ENCODE measurements at regions of chr4 and their contacts with region 1.

Region 1: GRCh38 chr4:159175085-159175988 is 72.5 kb downstream of the RAPGEF2 start:
- DNase-seq: peak; percentile 82 to 86
- H3K4me3 ChIP-seq: peak overlapping the region; percentile 22
- H3K4me3 Mint-ChIP-seq: peak overlapping the region; percentile 63
- H3K27ac Mint-ChIP-seq: peak overlapping the region; percentile 71
- H3K4me1 ChIP-seq: peaks cover 64% of the 10 kb centered on the region
- H3K4me1 Mint-ChIP-seq: peaks cover 72% of the 10 kb centered on the region
- H3K27me3 ChIP-seq: no peaks in the 10 kb centered on the region
- H3K27me3 Mint-ChIP-seq: no peaks in the 10 kb centered on the region
- CTCF ChIP-seq: peak; percentile 63 to 65

Region 2: GRCh38 chr4:158722917-158723793 is 452.2 kb before region 1 on chr4 and contains the start of gene PPID:
- CTCF ChIA-PET with region 1: no interaction called
- POLR2A ChIA-PET with region 1: no interaction called
- intact Hi-C with region 1: loop called (anchors 2 kb)
- DNase-seq: peak; percentile 85 to 88
- H3K4me3 ChIP-seq: peak within 1 kb of the TSS; percentile 68
- H3K4me3 Mint-ChIP-seq: peak within 1 kb of the TSS; percentile 90
- H3K27ac Mint-ChIP-seq: peak within 1 kb of the TSS; percentile 95
- H3K4me1 ChIP-seq: peaks cover 6% of the 10 kb centered on the region
- H3K4me1 Mint-ChIP-seq: peaks cover 9% of the 10 kb centered on the region
- H3K27me3 ChIP-seq: no peaks in the 10 kb centered on the region
- H3K27me3 Mint-ChIP-seq: no peaks in the 10 kb centered on the region
- CTCF ChIP-seq: no peak
- total RNA-seq, gene PPID: 50.9 and 57.2 TPM in 2 replicates

Region 3: GRCh38 chr4:158856852-158857251 is 318.5 kb before region 1 on chr4:
- CTCF ChIA-PET with region 1: interaction called, 6 read pairs
- POLR2A ChIA-PET with region 1: no interaction called
- intact Hi-C with region 1: loop called (anchors 1 kb)
- DNase-seq: peak in 1 of 2 experiments; percentile 28
- H3K4me3 ChIP-seq: no peak overlapping the region
- H3K4me3 Mint-ChIP-seq: no peak overlapping the region
- H3K27ac Mint-ChIP-seq: no peak overlapping the region
- H3K4me1 ChIP-seq: peaks cover 39% of the 10 kb centered on the region
- H3K4me1 Mint-ChIP-seq: peaks cover 30% of the 10 kb centered on the region
- H3K27me3 ChIP-seq: no peaks in the 10 kb centered on the region
- H3K27me3 Mint-ChIP-seq: no peaks in the 10 kb centered on the region
- CTCF ChIP-seq: peak; percentile 32 to 39

Region 4: GRCh38 chr4:159102622-159103383 is 72.5 kb before region 1 on chr4 and contains the start of gene RAPGEF2:
- CTCF ChIA-PET with region 1: no interaction called
- POLR2A ChIA-PET with region 1: no interaction called
- intact Hi-C with region 1: loop called (anchors 1 kb)
- DNase-seq: peak; percentile 93 to 94
- H3K4me3 ChIP-seq: peak within 1 kb of the TSS; percentile 94
- H3K4me3 Mint-ChIP-seq: peak within 1 kb of the TSS; percentile 99
- H3K27ac Mint-ChIP-seq: peak within 1 kb of the TSS; percentile 97
- H3K4me1 ChIP-seq: peaks cover 27% of the 10 kb centered on the region
- H3K4me1 Mint-ChIP-seq: peaks cover 35% of the 10 kb centered on the region
- H3K27me3 ChIP-seq: no peaks in the 10 kb centered on the region
- H3K27me3 Mint-ChIP-seq: no peaks in the 10 kb centered on the region
- CTCF ChIP-seq: peak in 1 of 2 experiments; percentile 37
- total RNA-seq, gene RAPGEF2: 65.6 and 67.6 TPM in 2 replicates

Region 5: DNA sequence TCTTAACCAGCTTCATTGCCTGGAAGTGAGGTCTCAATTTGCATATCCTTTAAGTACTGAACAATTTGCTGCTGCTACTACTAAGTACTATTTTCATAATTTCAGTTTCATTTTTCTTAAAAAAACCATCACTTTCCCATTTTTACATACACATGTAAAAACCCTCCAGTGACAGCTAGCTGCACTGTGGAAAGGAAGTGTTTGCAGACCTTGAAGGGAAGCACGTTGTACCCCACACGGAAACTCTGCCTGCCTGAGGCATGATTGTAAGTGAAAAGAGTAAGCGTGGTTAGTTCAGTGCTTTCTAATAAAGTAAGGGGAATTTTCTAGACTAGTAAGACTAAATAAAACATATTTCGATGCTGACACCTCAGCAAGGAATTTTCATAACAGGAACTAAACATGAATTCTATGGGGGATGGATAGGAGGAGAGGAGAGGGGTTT is 31.1 kb after region 1 on chr4:
- CTCF ChIA-PET with region 1: interaction called, 3 read pairs
- POLR2A ChIA-PET with region 1: no interaction called
- intact Hi-C with region 1: loop called (anchors 1 kb)
- DNase-seq: no peak
- H3K4me3 ChIP-seq: no peak overlapping the region
- H3K4me3 Mint-ChIP-seq: no peak overlapping the region
- H3K27ac Mint-ChIP-seq: no peak overlapping the region
- H3K4me1 ChIP-seq: no peaks in the 10 kb centered on the region; the same call in 1 of the 2 replicates
- H3K4me1 Mint-ChIP-seq: peaks cover 28% of the 10 kb centered on the region
- H3K27me3 ChIP-seq: no peaks in the 10 kb centered on the region
- H3K27me3 Mint-ChIP-seq: no peaks in the 10 kb centered on the region
- CTCF ChIP-seq: no peak

Measured in Caco-2 (cell line).